ENCODE measurements at regions of chr2 and their contacts with region 1.

Region 1: DNA sequence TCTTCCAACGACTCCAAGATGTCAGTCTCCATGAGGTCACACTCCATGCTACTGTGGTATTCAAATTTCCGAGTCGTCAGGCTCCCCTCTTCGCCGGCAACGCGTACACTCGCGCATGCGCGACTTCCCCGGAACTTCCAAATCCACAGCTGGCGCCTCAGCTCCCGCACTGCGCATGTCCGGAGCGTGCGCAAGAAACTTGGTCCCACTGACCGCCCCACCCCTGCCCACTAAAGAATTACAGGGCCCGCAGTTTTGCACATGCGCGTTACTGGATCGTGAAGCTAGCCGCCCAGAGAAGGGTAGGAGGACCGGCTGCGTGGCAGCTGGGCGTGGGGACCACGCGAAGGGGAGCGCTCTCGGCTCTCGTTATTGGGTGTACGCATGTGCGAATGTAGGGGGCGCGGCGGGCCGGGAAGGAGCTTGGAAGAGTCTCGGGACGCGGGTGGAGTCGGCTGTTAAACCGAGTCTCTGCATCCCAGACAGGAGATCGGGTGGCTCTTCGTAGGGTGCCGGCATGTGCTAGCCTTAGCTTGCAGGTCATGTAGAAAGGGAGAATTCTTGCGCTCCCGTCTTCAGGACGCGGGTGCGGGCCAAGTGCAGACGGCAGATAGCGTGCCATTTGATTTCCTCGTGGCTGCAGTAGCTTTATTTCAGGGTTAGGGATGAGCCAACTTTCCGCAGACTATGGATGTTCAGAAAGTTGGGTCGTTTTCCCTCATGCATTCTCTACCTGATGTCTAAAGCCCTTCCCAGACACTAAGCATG is at the start of gene FAM98A:
- DNase-seq: peak; percentile 99
- H3K4me3 ChIP-seq: peak within 1 kb of the TSS; percentile 77
- H3K27ac ChIP-seq: peak within 1 kb of the TSS; percentile 63
- H3K4me1 ChIP-seq: peaks cover 3% of the 10 kb centered on the region
- H3K27me3 ChIP-seq: no peaks in the 10 kb centered on the region
- CTCF ChIP-seq: no peak
- total RNA-seq, gene FAM98A: 23.1 to 35.0 TPM

Region 2: GRCh38 chr2:33475224-33476130 is 123.9 kb before region 1 on chr2:
- intact Hi-C with region 1: loop called (anchors 5 kb)
- DNase-seq: peak; percentile 87
- H3K4me3 ChIP-seq: peak overlapping the region; percentile 33
- H3K27ac ChIP-seq: peak overlapping the region; percentile 51
- H3K4me1 ChIP-seq: no peaks in the 10 kb centered on the region
- H3K27me3 ChIP-seq: no peaks in the 10 kb centered on the region
- CTCF ChIP-seq: peak; percentile 80

Measured in colonic mucosa (tissue), 4 donors.